PC-9 (cell line): ENCODE measurements at regions of chr9 and their contacts with region 1.

Region 1: GRCh38 chr9:111975709-111976108 is 79.1 kb downstream of the UGCG start:
- DNase-seq: no peak
- H3K4me3 ChIP-seq: no peak overlapping the region
- H3K27ac ChIP-seq: no peak overlapping the region
- H3K4me1 ChIP-seq: peaks cover 17% of the 10 kb centered on the region
- H3K27me3 ChIP-seq: no peaks in the 10 kb centered on the region
- CTCF ChIP-seq: no peak

Region 2: DNA sequence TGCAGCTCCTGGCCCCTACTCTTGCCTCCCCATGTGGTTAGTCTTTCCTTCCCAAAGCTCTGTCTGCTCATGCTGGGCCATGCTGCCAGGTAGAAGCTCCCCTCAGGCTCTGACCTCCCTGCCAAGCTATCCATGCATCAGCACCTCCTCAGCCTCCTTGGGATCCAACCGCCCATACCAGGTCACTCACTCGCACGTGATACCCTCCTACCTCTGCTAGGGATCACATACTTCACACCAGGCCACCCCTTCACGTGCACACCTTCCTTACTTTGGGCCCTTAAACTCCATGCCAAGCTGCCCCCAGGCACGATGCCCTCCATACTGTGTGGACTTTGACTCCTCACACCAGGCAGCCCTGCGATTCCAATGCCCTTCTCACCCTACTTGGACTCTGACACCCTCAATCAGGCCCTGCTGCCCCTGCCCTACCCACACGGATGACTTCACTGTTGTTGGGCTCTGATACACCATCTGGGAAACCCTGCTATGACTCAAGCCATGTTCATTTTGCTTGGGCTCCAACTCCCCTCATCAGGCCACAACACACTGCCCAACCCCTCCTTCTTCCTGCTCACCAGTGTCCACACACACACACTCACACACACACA is 416.6 kb before region 1 on chr9:
- CTCF ChIA-PET with region 1: interaction called, 11 read pairs
- POLR2A ChIA-PET with region 1: no interaction called
- intact Hi-C with region 1: no loop called
- DNase-seq: peak; percentile 35 to 37
- H3K4me3 ChIP-seq: no peak overlapping the region
- H3K27ac ChIP-seq: no peak overlapping the region
- H3K4me1 ChIP-seq: no peaks in the 10 kb centered on the region
- H3K27me3 ChIP-seq: no peaks in the 10 kb centered on the region
- CTCF ChIP-seq: no peak

Region 3: DNA sequence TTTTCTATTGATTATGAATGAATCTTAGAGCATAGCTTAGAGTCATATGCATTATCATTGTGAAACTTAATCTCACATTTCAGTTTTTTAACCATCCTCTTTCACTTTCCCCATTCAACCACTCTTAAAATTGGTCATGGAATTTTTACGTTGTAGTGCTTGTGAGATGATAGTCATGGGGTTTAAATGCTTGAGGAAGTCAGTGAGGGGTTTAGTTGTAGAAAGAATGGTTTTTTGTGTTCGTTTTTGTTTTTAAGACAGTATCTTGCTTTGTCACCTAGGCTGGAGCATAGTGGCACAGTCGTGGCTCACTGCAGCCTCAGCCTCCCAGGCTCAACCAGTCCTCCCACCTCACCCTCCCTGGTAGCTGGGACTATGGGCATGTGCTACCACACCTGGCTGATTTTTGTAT is 59.5 kb before region 1 on chr9:
- CTCF ChIA-PET with region 1: no interaction called
- POLR2A ChIA-PET with region 1: no interaction called
- intact Hi-C with region 1: no loop called
- DNase-seq: no peak
- H3K4me3 ChIP-seq: no peak overlapping the region
- H3K27ac ChIP-seq: no peak overlapping the region; the same call in 1 of the 2 replicates
- H3K4me1 ChIP-seq: no peaks in the 10 kb centered on the region
- H3K27me3 ChIP-seq: no peaks in the 10 kb centered on the region
- CTCF ChIP-seq: no peak

Region 4: DNA sequence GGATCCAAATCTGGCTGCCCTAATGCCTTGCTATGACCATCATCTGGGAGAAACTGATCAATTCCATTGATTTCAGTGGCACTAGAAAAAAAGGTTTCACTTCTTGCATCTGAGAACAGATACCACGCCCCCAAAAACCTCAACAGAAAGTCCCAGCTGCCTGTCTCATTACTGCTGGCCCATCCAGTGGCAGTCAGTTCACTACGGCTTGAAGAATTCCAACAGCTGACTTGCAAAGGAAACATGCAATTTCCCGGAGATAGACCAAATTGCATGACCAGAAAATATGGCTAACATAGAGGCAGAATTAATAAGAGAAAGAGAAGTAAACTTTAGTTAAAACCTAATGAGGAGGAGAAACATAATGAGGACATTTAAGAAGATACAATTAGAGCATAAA is 30.5 kb before region 1 on chr9:
- CTCF ChIA-PET with region 1: no interaction called
- POLR2A ChIA-PET with region 1: no interaction called
- intact Hi-C with region 1: no loop called
- DNase-seq: no peak
- H3K4me3 ChIP-seq: no peak overlapping the region
- H3K27ac ChIP-seq: no peak overlapping the region
- H3K4me1 ChIP-seq: no peaks in the 10 kb centered on the region; the same call in 1 of the 2 replicates
- H3K27me3 ChIP-seq: no peaks in the 10 kb centered on the region
- CTCF ChIP-seq: no peak

Region 5: GRCh38 chr9:111957856-111958652 is 17.7 kb before region 1 on chr9:
- CTCF ChIA-PET with region 1: interaction called, 3 read pairs
- POLR2A ChIA-PET with region 1: no interaction called
- intact Hi-C with region 1: loop called (anchors 1 kb)
- DNase-seq: peak; percentile 68 to 96
- H3K4me3 ChIP-seq: peak overlapping the region; percentile 7; the same call in 1 of the 2 replicates
- H3K27ac ChIP-seq: peak overlapping the region; percentile 83
- H3K4me1 ChIP-seq: peaks cover 35% of the 10 kb centered on the region
- H3K27me3 ChIP-seq: no peaks in the 10 kb centered on the region
- CTCF ChIP-seq: no peak

Region 6: GRCh38 chr9:112012026-112012902 is 36.6 kb after region 1 on chr9:
- CTCF ChIA-PET with region 1: no interaction called
- POLR2A ChIA-PET with region 1: interaction called, 4 read pairs
- intact Hi-C with region 1: loop called (anchors 1 kb)
- DNase-seq: peak; percentile 83 to 91
- H3K4me3 ChIP-seq: peak overlapping the region; percentile 3; the same call in 1 of the 2 replicates
- H3K27ac ChIP-seq: peak overlapping the region; percentile 91
- H3K4me1 ChIP-seq: peaks cover 45% of the 10 kb centered on the region
- H3K27me3 ChIP-seq: no peaks in the 10 kb centered on the region
- CTCF ChIP-seq: no peak

Region 7: GRCh38 chr9:112361601-112362000 is 385.9 kb after region 1 on chr9:
- CTCF ChIA-PET with region 1: no interaction called
- POLR2A ChIA-PET with region 1: no interaction called
- intact Hi-C with region 1: no loop called
- DNase-seq: peak in 1 of 2 experiments; percentile 53
- H3K4me3 ChIP-seq: no peak overlapping the region
- H3K27ac ChIP-seq: no peak overlapping the region
- H3K4me1 ChIP-seq: peaks cover 11% of the 10 kb centered on the region; the same call in 1 of the 2 replicates
- H3K27me3 ChIP-seq: no peaks in the 10 kb centered on the region
- CTCF ChIP-seq: peak; percentile 78